Posterior vena cava (tissue), 2 donors: ENCODE measurements at regions of chr3 and their contacts with region 1.

Region 1: DNA sequence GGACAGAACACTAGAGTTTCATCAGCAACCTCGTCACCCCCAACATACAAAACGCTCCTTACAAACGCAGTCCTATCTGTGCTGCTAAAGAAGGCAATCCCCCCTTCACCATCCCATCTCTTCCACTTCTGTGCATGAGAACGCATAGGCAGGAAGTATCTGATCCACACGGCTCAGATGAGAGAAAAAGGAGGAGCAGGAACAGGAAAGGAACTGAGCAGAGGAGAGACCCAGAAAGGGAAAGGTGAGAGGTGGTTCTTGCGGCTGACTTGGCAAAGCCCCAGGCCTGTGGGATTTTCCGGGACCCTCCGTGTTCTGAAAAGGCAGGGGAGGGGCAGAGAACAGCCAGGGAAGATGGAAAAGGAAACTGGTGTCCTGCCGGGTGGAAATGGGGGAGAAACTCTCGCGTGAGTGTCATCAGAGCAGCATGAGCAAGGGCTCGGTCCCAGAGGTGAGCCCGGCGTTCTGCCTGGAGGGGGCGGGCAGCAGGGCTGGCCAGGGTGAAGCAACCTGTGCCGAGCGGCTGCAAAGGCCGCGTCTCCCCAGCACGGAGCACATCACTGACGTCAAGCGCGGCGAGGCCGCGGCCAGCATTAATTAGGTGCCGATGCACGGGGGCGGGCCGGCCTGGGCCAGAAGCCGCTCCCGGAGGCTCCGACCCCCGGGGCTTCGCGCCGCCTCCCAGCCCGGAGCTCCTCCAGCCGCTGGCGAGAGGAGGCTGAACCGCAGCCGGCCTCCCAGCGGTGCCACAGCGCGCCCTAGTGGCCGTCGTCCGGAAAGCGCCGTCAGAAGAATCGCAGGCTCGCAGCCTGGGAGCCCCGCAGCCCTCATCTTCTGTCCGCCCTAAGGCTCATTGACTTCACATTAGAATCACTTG is 35.8 kb downstream of the CPN2 start:
- DNase-seq: peak; percentile 97

Region 2: DNA sequence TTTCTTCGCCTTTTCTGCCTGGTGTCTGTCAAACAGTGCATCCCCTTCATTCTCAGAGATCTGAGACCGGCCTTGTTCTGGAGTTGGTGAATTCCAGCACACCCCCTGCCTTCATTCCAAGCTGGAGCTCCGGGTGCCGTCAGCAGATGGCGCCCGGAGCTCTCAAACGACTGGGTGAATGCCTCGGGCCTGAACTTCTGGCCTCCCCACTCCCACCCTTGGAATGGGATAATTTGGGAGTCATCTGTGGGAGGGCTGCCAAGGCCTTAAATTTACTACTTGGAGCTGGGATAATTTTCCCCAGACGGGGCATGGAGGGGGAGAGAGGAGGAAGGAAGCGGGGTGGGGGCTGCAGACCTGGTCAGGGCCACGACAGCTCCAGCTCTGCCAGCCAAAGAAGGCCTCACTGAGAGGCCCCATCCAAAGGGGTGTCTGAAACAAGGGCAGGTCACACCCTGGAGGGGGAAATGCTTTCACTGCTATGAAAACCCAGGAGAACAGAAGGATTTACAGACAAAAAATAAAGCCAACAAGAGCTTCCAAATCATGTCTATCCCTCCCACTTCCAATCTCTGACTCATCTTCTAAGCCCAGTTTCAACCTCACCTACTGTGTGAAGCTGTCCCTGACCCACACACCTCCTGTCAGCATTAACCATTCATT is 534.4 kb before region 1 on chr3:
- intact Hi-C with region 1: loop called (anchors 1 to 5 kb)
- DNase-seq: peak; percentile 89

Region 3: GRCh38 chr3:194141415-194142155 is 173.7 kb before region 1 on chr3:
- intact Hi-C with region 1: loop called (anchors 2 to 5 kb)
- DNase-seq: peak; percentile 96

Region 4: DNA sequence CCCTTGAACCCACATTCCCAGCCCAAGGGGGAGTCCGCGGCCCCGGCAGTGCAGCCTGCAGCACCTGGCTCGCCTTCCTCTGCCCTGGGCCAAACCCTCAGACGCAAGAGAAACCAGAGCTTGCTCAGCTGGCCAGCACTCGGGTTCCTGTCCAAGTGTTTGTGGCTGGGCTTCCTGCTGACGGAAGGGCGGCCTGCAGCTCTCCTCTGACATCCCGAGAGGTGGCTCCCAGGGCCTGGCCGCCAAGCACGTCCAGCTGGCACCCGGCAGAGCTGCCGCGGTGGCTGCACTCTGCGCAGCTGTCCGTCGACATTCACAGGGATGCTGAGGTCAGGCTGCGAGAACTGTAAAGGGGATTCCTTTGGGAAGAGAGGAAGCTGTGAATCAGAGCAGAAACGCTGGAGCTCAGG is 49.8 kb before region 1 on chr3:
- intact Hi-C with region 1: loop called in 1 of 2 experiments (anchors 5 kb)
- DNase-seq: peak; percentile 97